Activated naive CD4-positive, alpha-beta T cell treated with anti-CD3 and anti-CD28 coated beads for 36 hours (primary cell): ENCODE measurements at regions of chr13 and their contacts with region 1.

Region 1: DNA sequence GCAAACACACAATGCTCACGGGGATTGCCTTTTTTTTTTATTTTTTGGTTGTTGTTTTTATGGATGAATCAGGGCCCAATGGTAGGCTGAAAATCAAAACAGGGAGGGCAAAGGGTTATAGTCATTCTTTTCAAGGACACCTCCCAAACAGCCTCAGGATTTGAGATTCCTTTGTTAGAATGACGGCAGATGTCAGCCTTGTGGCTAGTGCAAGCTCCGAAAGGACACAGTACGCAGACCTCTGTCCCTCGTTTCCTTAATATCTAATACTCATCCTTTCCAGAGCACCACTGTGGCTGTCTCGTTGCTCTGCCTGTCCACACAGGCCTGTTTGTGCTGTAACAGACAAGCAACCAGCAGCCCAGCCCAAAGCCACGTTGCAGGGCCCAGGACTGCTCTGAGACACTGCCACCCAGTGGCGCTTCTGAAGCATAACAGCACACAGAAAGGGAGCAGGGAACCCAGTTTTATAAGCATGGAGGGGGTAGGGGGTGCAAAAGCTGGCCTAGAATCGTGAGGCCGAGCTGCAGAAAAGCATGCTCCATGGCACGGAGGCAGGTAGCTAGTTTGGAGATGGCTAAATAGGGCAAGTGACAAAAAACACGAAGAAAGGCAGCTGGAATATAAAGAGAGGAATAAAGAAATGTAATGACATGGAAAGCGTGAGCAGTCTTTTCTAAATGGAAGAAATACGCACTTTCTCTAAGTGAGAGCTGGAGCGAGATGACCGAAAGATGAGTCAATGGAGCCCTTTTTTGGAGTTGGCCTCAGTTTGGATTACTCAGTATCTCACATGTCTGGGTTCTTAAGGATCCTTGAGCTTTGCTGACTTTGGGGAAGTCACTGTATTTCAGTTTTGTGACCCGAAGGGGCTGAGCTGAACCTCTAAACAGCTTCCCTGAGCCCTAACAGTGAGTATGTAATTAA is 40.7 kb upstream of the MEDAG start:
- DNase-seq: peak; percentile 64
- H3K4me3 Mint-ChIP-seq: no peak overlapping the region
- H3K27ac Mint-ChIP-seq: no peak overlapping the region
- H3K4me1 Mint-ChIP-seq: peaks cover 3% of the 10 kb centered on the region
- H3K27me3 Mint-ChIP-seq: peaks cover 8% of the 10 kb centered on the region

Region 2: GRCh38 chr13:30679483-30680330 is 185.7 kb before region 1 on chr13:
- CTCF ChIA-PET with region 1: interaction called, 3 read pairs
- intact Hi-C with region 1: loop called (anchors 1 kb)
- DNase-seq: peak; percentile 54
- H3K4me3 Mint-ChIP-seq: no peak overlapping the region
- H3K27ac Mint-ChIP-seq: no peak overlapping the region
- H3K4me1 Mint-ChIP-seq: peaks cover 4% of the 10 kb centered on the region
- H3K27me3 Mint-ChIP-seq: no peaks in the 10 kb centered on the region

Region 3: DNA sequence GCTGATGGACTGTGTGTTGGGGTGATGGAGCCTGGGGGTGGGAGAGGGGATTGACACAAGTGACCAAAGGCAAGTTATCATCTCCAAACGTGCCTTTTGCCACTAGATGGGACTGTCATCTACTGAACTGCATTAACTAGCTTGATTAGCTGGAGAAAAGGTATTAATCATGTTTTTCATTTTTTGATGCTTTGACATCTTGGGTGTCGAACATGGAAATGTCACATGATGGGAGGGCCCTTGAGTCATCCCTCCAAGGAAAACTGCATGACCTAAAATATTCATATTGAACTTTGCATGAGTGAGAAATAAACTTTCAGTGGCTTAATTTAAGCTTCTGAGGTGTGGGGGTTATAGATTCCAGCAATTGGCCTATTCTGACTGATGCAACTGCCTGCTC is 56.8 kb before region 1 on chr13:
- CTCF ChIA-PET with region 1: interaction called, 9 read pairs
- intact Hi-C with region 1: loop called (anchors 1 kb)
- DNase-seq: no peak
- H3K4me3 Mint-ChIP-seq: no peak overlapping the region
- H3K27ac Mint-ChIP-seq: no peak overlapping the region
- H3K4me1 Mint-ChIP-seq: peaks cover 9% of the 10 kb centered on the region
- H3K27me3 Mint-ChIP-seq: no peaks in the 10 kb centered on the region

Region 4: GRCh38 chr13:30832845-30833332 is 32.5 kb before region 1 on chr13:
- CTCF ChIA-PET with region 1: no interaction called
- intact Hi-C with region 1: loop called (anchors 2 kb)
- DNase-seq: peak; percentile 77
- H3K4me3 Mint-ChIP-seq: no peak overlapping the region
- H3K27ac Mint-ChIP-seq: no peak overlapping the region
- H3K4me1 Mint-ChIP-seq: peaks cover 4% of the 10 kb centered on the region
- H3K27me3 Mint-ChIP-seq: peaks cover 15% of the 10 kb centered on the region

Region 5: DNA sequence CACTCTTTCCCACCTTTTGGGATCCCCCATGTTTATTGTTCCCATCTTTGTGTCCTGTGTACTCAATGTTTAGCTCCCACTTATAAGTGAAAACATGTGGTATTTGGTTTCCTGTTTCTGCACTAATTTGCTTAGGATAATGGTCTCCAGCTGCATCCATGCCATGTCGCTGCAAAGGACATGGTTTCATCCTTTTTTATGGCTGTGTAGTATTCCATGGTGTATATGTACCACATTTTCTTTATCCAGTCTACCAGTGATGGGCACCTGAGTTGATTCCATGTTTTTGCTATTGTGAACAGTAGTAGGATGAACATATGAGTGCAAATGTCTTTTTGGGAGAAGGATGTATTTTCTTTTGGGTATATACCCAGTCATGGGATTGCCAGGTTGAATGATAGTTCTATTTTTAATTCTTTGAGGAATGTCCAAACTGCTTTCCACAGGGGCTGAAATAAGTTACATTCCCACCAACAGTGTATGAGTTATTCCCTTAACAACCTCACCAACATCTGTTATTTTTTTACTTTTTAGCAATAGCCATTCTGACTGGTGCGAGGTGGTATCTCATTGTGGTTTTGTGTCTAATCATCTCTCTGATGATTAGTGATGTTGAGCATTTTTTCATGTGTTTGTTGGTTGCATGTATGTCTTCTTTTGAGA is 15.1 kb before region 1 on chr13:
- CTCF ChIA-PET with region 1: interaction called, 34 read pairs
- intact Hi-C with region 1: no loop called
- DNase-seq: no peak
- H3K4me3 Mint-ChIP-seq: no peak overlapping the region
- H3K27ac Mint-ChIP-seq: no peak overlapping the region
- H3K4me1 Mint-ChIP-seq: peaks cover 9% of the 10 kb centered on the region
- H3K27me3 Mint-ChIP-seq: peaks cover 2% of the 10 kb centered on the region

Region 6: DNA sequence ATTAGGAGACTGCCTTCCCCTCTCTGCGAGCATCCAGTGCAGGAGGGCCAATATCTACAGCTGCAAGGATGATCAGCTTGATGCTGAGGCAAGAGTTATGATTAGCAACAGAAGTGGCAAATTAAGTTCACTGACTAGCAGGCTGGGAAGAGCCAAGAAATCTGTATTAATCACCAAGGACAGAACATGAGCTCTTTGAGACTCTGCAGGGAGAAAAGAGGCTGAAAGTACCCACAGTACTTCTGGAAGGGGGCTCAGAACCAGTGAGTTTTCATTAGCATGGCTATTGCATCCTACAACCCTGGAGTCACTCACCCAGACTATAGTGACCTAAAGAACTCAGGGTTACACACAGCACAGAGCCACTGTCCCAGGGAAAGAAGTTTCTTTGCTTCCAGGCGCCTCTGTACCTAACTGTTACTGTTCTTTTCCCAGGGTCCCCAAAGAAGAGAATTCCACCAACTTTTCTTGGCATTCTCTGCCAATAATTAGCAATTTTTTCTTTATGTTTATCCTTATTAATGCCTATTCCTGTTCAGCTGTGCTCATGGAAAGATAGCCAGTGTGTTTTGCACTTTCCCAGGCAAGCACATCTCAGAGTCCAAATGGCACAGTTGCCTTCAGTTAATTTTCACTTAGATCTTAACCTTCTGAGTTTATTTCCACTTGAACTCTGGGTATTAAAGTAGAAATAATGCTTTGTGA is 14.9 kb after region 1 on chr13:
- CTCF ChIA-PET with region 1: interaction called, 31 read pairs
- intact Hi-C with region 1: no loop called
- DNase-seq: no peak
- H3K4me3 Mint-ChIP-seq: no peak overlapping the region
- H3K27ac Mint-ChIP-seq: no peak overlapping the region
- H3K4me1 Mint-ChIP-seq: peaks cover 11% of the 10 kb centered on the region
- H3K27me3 Mint-ChIP-seq: peaks cover 10% of the 10 kb centered on the region